Activated B cell treated with CpG ODN at 0.5 μM for 24 hours (primary cell): ENCODE measurements at regions of chr5 and their contacts with region 1.

Region 1: GRCh38 chr5:41903892-41904799 is at the start of gene RIMOC1:
- DNase-seq: peak; percentile 97
- ATAC-seq: peak; percentile 92
- H3K4me3 Mint-ChIP-seq: peak within 1 kb of the TSS; percentile 99
- H3K27ac Mint-ChIP-seq: peak within 1 kb of the TSS; percentile 99
- H3K4me1 Mint-ChIP-seq: peaks cover 34% of the 10 kb centered on the region
- H3K27me3 Mint-ChIP-seq: peaks cover 4% of the 10 kb centered on the region
- CTCF ChIP-seq: no peak
- total RNA-seq, gene RIMOC1: 26.0 and 30.2 TPM in 2 replicates

Region 2: GRCh38 chr5:40755407-40756365 is 1148.5 kb before region 1 on chr5 and contains the start of gene TTC33:
- CTCF ChIA-PET with region 1: no interaction called
- POLR2A ChIA-PET with region 1: no interaction called
- intact Hi-C with region 1: loop called (anchors 1 kb)
- DNase-seq: peak; percentile 88
- ATAC-seq: peak; percentile 93
- H3K4me3 Mint-ChIP-seq: no peak within 1 kb of the TSS
- H3K27ac Mint-ChIP-seq: no peak within 1 kb of the TSS
- H3K4me1 Mint-ChIP-seq: peaks cover 7% of the 10 kb centered on the region
- H3K27me3 Mint-ChIP-seq: no peaks in the 10 kb centered on the region
- CTCF ChIP-seq: no peak
- total RNA-seq, gene TTC33: 9.0 and 9.2 TPM in 2 replicates

Region 3: DNA sequence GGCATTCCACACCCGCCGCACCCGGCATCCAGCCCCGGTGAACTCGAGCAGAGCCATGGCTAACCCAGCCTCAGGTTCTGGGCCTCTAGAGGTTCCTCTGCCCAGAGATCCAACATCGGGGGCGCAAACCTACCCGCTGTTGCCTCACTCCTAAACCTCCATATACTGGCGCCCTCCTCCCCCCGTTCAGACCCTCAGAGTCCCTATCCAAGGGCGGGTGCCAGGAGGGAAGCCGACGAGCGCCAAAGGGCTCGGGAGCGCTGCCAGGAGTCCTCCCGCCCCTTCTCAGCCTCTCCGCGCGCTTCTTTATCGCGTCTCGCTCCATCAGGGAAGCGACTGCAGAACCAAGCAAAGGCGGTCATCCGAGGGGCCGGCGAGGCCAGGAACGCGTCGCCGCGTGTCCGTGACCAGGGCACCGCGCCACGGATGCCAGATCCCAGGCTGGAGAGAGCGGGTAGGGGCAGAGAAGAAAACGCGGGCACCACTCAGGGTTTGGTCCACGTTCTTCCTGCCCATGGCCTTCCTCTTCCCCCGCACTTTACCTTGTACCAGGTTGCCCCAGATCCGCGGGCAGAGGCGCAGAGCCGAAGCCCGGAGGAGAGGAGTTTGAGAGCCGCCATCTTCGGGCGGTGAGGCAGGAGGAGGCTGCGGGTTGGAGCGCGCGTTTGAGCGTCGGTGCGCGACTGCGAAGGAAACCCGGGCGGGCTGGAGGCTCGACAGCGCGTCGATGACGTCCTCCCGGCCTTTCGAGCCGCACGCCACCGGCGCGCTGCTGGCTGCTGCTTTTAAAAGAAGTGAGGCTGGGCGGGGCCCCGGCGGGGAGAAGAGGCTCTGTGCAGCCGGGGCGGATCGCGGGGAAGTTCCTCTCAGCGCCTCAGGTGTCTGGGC is 34.2 kb before region 1 on chr5 and contains the start of gene OXCT1:
- CTCF ChIA-PET with region 1: no interaction called
- POLR2A ChIA-PET with region 1: interaction called, 40 read pairs
- intact Hi-C with region 1: loop called (anchors 1 kb)
- DNase-seq: peak; percentile 82
- ATAC-seq: peak; percentile 95
- H3K4me3 Mint-ChIP-seq: peak within 1 kb of the TSS; percentile 93
- H3K27ac Mint-ChIP-seq: peak within 1 kb of the TSS; percentile 91
- H3K4me1 Mint-ChIP-seq: peaks cover 32% of the 10 kb centered on the region
- H3K27me3 Mint-ChIP-seq: no peaks in the 10 kb centered on the region
- CTCF ChIP-seq: no peak
- total RNA-seq, gene OXCT1: 27.3 and 27.4 TPM in 2 replicates

Region 4: DNA sequence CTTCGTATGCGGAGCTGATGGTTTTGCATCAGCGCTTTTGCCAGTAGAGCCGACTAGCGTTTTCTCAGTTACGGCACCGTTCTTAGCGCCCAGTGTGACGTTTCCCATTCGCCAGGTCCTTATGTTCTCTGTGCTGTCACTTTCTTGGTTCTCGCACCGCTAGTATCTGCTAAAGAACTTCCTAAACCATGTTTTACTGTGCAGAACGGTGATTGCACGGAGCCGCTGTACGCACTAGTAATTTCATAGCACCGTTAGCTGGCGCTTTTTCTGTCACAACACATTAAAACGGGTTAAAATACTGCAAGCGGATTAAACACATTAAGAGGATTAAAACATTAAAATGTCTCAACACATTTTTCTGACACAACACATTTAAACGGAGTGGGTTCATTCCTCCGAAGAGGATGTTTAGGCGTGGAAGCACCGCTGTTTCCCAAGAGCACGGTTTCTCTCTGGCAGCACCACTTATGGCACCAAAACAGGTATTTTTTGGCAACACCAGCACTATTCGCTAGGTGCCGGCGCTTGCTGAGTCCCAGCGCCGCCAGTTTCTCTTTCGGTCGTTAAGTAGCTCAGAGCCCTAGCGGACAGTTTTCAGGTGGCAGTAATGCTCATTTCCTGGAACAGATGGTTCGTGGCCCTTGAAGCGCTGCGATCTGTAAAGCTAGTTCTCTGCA is 1115.6 kb after region 1 on chr5:
- CTCF ChIA-PET with region 1: no interaction called
- POLR2A ChIA-PET with region 1: interaction called, 4 read pairs
- intact Hi-C with region 1: loop called (anchors 1 kb)
- DNase-seq: peak; percentile 61
- ATAC-seq: peak; percentile 64
- H3K4me3 Mint-ChIP-seq: peak overlapping the region; percentile 97
- H3K27ac Mint-ChIP-seq: peak overlapping the region; percentile 100
- H3K4me1 Mint-ChIP-seq: peaks cover 39% of the 10 kb centered on the region
- H3K27me3 Mint-ChIP-seq: no peaks in the 10 kb centered on the region
- CTCF ChIP-seq: no peak

Region 5: DNA sequence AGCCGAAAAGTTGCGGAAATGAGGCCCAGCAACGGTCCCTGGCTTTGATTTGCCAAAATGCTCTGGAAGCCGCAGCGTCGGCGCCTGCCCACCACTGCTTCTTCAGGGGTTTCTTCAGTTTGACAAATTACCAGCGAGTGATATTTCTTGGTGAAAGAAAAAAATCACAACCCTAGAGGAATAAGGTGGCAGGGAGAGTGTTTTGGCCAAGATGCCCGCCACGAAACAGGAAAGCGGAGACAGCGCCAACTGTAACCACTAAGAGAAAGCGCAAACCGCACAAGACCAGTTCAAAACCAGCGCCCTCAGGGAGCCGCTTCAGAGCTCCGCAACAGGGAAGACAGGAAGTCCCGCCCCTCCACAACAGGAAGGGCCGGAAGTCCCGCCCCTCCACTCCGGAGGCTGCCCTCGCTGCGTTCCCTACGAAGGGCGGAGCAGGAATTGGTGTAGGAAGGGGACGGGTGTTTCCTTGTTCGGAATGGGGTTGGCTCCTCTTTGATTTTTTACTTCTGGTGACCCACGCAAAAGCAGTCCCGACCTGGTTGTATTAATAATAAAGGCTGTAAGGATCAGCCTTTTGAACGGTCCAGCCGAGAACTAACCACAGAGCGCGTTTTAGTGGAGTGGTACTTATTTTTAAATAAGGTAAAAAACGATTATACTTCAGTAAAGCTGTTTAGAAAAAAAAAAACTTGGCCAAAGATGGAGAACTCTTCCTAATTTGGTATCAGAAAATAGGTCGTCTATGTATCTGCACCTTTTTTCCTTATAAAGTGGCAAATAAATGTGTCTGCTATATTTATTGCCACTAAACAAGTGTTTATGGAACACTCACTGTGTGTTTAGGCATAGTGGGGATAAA is 1610.9 kb after region 1 on chr5 and contains the start of gene C5orf34:
- CTCF ChIA-PET with region 1: no interaction called
- POLR2A ChIA-PET with region 1: no interaction called
- intact Hi-C with region 1: loop called (anchors 1 kb)
- DNase-seq: peak; percentile 92
- ATAC-seq: peak; percentile 96
- H3K4me3 Mint-ChIP-seq: peak within 1 kb of the TSS; percentile 95
- H3K27ac Mint-ChIP-seq: peak within 1 kb of the TSS; percentile 95
- H3K4me1 Mint-ChIP-seq: peaks cover 23% of the 10 kb centered on the region
- H3K27me3 Mint-ChIP-seq: no peaks in the 10 kb centered on the region
- CTCF ChIP-seq: no peak
- total RNA-seq, gene C5orf34: 4.4 and 4.7 TPM in 2 replicates